Activated CD4-positive, alpha-beta T cell treated with anti-CD3 and anti-CD28 coated beads, Interleukin-2, amount 10 ng/mL, durations not matched to agents 7 days and 5 days (primary cell): ENCODE measurements at regions of chr17 and their contacts with region 1.

Region 1: GRCh38 chr17:4480929-4481898 is 17.5 kb upstream of the SPNS2 start:
- DNase-seq: peak; percentile 62
- H3K4me3 Mint-ChIP-seq: peak overlapping the region; percentile 55
- H3K27ac Mint-ChIP-seq: peak overlapping the region; percentile 95
- H3K4me1 Mint-ChIP-seq: peaks cover 54% of the 10 kb centered on the region
- H3K27me3 Mint-ChIP-seq: no peaks in the 10 kb centered on the region

Region 2: DNA sequence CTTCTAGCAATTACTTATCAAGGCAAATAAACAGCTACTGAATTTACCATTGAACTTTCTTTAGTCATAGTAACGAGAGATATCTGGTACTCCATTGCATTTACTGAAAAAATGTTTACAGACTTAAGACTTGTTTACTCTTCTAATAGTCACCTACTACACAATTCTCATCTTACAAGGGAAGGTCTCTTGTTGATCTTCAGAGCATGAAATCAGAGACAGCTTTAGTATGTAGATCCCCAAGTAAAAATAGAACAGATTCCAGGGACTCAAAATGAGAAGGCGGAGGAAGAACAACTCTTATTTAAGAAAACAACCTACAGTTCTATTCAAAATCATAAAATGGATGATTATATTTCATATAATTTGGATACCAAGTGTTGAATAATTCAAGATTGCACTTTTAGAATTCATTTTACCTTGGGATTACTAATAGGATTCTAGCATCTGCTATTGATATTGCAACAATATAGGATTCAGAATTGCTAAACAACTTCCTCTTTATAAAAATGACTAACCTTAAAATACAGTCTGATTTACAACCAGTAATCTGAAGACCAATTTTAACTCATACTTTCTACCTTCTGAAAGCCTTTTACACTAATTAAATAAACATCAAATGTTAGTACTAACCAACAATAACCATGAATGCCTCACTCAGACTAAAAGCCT is 135.5 kb before region 1 on chr17:
- CTCF ChIA-PET with region 1: no interaction called
- POLR2A ChIA-PET with region 1: no interaction called
- DNase-seq: no peak
- H3K4me3 Mint-ChIP-seq: no peak overlapping the region
- H3K27ac Mint-ChIP-seq: peak overlapping the region; percentile 74
- H3K4me1 Mint-ChIP-seq: peaks cover 10% of the 10 kb centered on the region
- H3K27me3 Mint-ChIP-seq: no peaks in the 10 kb centered on the region

Region 3: GRCh38 chr17:5055543-5055942 is 574.3 kb after region 1 on chr17:
- CTCF ChIA-PET with region 1: no interaction called
- POLR2A ChIA-PET with region 1: interaction called, 11 read pairs
- DNase-seq: no peak
- H3K4me3 Mint-ChIP-seq: no peak overlapping the region
- H3K27ac Mint-ChIP-seq: no peak overlapping the region
- H3K4me1 Mint-ChIP-seq: peaks cover 7% of the 10 kb centered on the region
- H3K27me3 Mint-ChIP-seq: no peaks in the 10 kb centered on the region